ENCODE measurements at regions of chr16 and their contacts with region 1.

Region 1: GRCh38 chr16:24810951-24811843 is 34.6 kb upstream of the SLC5A11 start:
- DNase-seq: no peak
- ATAC-seq: no peak
- H3K4me3 Mint-ChIP-seq: no peak overlapping the region
- H3K27ac Mint-ChIP-seq: no peak overlapping the region
- H3K4me1 Mint-ChIP-seq: no peaks in the 10 kb centered on the region
- H3K27me3 Mint-ChIP-seq: no peaks in the 10 kb centered on the region
- CTCF ChIP-seq: no peak

Region 2: DNA sequence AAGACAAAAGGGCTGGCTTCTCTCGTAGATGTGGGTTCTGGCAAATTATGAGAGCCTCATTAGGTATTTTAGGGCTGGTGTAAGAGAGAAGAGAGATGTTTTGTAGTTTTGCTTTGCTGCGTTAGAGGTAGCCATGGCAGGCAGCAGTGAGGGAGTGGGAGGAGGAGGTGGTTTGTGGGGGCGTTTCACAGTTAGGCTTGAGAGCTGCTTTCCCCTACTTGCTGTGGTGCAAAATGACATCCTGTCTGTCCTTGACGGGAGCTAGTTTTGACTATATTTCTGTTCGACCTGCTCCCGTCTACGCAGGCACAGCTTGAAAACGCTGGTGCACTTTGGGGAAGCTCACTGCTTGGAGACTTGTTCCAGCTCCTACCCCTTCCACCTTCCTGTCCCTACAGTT is 110.0 kb after region 1 on chr16:
- CTCF ChIA-PET with region 1: no interaction called
- POLR2A ChIA-PET with region 1: no interaction called
- intact Hi-C with region 1: loop called (anchors 10 kb)
- DNase-seq: no peak
- ATAC-seq: no peak
- H3K4me3 Mint-ChIP-seq: no peak overlapping the region
- H3K27ac Mint-ChIP-seq: peak overlapping the region; percentile 64
- H3K4me1 Mint-ChIP-seq: peaks cover 7% of the 10 kb centered on the region
- H3K27me3 Mint-ChIP-seq: no peaks in the 10 kb centered on the region
- CTCF ChIP-seq: no peak

Measured in activated B cell treated with CpG ODN at 0.5 μM for 24 hours (primary cell).